AG04450 (cell line): ENCODE measurements at regions of chr10 and their contacts with region 1.

Region 1: GRCh38 chr10:58299580-58299979 is 30.6 kb downstream of the CISD1 start:
- DNase-seq: no peak
- H3K4me3 ChIP-seq: no peak overlapping the region
- H3K27ac ChIP-seq: no peak overlapping the region
- H3K27me3 ChIP-seq: no peaks in the 10 kb centered on the region
- CTCF ChIP-seq: peak; percentile 94

Region 2: DNA sequence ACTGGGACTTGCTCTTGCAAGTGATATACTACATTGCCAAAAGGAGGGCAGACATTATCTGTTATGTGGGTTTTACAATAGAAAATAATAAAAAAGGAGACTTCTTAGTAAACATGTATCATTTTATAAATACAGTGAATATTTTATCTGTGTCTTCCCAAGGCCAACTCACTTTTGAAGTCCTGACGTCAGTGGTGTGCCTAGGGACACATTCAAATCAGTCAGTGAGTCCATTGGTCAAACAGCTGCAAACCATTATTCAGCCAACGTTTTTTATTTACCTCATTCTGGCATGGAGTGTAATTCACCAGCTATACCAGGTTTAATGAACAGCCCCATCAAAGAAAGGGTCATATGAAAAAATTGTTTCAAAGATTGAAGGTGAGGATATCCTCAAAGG is 295.6 kb before region 1 on chr10:
- CTCF ChIA-PET with region 1: no interaction called
- POLR2A ChIA-PET with region 1: no interaction called
- DNase-seq: no peak
- H3K4me3 ChIP-seq: no peak overlapping the region
- H3K27ac ChIP-seq: no peak overlapping the region
- H3K27me3 ChIP-seq: no peaks in the 10 kb centered on the region
- CTCF ChIP-seq: no peak

Region 3: DNA sequence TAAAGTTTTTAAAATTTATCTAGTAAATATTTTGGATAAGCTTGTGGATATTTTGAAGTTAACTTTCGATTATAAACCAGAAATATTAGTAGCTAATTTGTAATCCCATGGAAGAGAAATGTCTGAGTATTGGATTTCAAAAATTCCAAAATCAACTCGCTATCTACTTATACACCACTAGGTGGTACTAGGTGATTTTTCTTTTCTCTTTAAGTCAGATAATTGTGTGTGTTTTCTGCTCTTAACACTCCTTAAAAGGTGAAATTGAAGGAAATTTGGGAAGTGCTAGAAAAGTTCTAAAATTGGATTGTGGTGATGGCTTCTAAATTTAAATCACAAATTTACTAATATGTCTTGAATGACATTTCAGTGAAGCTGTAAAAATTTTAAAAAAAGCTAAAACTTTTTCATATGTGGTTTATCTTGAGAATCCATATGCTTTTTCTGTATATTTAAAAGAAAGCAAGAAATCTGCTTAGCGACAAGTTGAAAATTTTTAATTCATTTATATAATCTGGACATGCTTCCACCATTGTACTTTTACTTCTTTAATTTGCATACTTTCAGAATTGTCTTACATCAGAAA is 122.1 kb before region 1 on chr10:
- CTCF ChIA-PET with region 1: interaction called, 266 read pairs
- POLR2A ChIA-PET with region 1: no interaction called
- DNase-seq: no peak
- H3K4me3 ChIP-seq: no peak overlapping the region
- H3K27ac ChIP-seq: no peak overlapping the region
- H3K27me3 ChIP-seq: no peaks in the 10 kb centered on the region
- CTCF ChIP-seq: peak; percentile 66

Region 4: DNA sequence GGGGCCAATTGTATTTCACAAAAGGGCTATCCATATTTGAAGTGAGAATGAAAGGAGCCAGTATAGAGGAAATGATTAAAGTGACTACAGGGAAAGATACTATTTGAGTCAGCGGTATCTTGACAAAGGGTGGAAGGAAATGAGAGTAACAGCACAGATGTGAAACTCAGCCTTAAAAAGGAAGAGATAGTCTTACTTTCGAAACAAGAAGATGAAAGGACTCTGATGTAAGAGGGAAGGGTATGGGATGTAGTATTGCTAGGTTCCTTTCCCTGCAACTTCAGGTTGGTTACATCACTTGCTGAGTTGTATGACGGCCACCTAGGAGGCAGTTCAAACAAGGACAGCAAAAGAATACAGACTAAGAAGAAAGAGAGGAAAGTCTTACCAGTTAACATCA is 17.0 kb before region 1 on chr10:
- CTCF ChIA-PET with region 1: interaction called, 16 read pairs
- POLR2A ChIA-PET with region 1: no interaction called
- DNase-seq: no peak
- H3K4me3 ChIP-seq: no peak overlapping the region
- H3K27ac ChIP-seq: no peak overlapping the region
- H3K27me3 ChIP-seq: no peaks in the 10 kb centered on the region
- CTCF ChIP-seq: no peak

Region 5: GRCh38 chr10:58350619-58351323 is 51.2 kb after region 1 on chr10:
- CTCF ChIA-PET with region 1: interaction called, 19 read pairs
- POLR2A ChIA-PET with region 1: no interaction called
- DNase-seq: no peak
- H3K4me3 ChIP-seq: no peak overlapping the region
- H3K27ac ChIP-seq: no peak overlapping the region
- H3K27me3 ChIP-seq: no peaks in the 10 kb centered on the region
- CTCF ChIP-seq: no peak

Region 6: DNA sequence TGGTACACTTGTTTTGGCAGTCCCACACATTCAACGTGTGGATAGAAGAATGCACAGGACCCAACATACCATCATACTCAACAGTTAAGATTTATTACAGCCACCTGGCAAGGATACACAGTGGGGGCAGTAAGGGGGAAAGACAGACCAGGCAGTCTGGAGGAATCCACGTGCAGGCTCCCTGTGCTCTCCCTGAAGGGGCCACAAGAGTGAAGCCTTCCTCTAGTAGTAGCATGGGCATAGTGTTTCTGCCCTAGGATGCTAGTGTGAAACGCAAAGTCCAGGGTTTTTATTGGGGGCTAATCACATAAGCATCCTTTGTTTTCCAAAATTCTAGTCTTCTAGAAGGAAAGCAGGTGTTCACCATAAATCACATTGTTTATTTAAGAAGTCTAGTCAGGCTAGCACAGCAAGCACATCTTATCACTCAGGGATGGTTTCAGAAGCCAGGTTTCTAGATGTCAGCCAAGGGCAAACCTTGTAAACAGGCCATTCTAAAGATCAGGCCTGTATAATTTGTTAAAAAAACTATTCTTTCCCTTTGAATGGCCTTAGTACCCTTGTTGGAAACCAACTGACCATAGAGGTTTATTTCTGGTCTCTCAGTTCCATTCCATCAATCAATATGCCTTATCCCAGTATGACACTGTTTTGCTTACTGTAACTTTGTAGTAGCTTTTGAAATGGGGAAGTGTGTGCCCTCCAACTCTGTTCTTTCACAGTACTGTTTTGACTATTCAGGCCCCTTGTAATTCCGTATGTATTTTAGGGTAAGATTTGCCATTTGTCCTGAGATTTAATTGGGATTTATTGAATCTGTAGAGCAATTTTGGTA is 73.2 kb after region 1 on chr10:
- CTCF ChIA-PET with region 1: interaction called, 17 read pairs
- POLR2A ChIA-PET with region 1: interaction called, 3 read pairs
- DNase-seq: no peak
- H3K4me3 ChIP-seq: no peak overlapping the region
- H3K27ac ChIP-seq: no peak overlapping the region
- H3K27me3 ChIP-seq: no peaks in the 10 kb centered on the region
- CTCF ChIP-seq: no peak

Region 7: GRCh38 chr10:58393317-58393716 is 93.7 kb after region 1 on chr10:
- CTCF ChIA-PET with region 1: interaction called, 22 read pairs
- POLR2A ChIA-PET with region 1: no interaction called
- DNase-seq: no peak
- H3K4me3 ChIP-seq: no peak overlapping the region
- H3K27ac ChIP-seq: no peak overlapping the region
- H3K27me3 ChIP-seq: no peaks in the 10 kb centered on the region
- CTCF ChIP-seq: 0 out of 2 replicates have a peak, but pooled peaks have one; percentile 16